A673 (cell line): ENCODE measurements at regions of chr11 and their contacts with region 1.

Region 1: GRCh38 chr11:59822989-59823566 is 12.5 kb upstream of the MRPL16 start:
- DNase-seq: peak; percentile 73
- H3K4me3 ChIP-seq: no peak overlapping the region
- H3K27ac ChIP-seq: no peak overlapping the region
- H3K4me1 ChIP-seq: no peaks in the 10 kb centered on the region
- H3K27me3 ChIP-seq: no peaks in the 10 kb centered on the region
- CTCF ChIP-seq: peak; percentile 68

Region 2: DNA sequence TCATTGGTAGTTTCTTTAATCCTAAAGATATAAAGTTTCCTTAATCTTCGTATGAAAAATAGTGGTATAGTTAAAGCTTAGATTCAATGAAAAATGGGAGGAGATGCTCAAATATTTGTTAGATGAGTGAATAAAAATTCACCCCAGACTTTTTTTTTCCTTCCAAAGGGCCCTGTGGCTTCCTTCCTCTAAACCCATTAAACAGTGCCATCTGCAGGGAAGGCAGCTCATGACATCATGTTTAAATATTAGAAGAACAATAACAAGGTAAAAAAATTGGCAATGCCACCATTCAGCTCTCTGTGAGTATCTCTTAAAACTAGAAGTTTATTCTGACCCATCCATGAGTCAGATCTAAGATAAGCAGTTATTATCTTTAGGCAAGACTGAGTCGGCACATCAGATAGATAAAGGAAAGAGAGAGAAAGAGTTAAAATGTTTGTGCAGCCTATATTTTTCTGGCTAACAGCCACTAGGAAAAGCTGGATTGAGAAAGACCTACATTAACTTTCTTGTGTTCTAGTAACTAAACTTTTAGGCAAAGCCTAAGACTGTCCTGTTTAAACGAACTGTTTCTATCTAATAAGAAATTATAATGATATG is 96.0 kb after region 1 on chr11:
- CTCF ChIA-PET with region 1: interaction called, 7 read pairs
- POLR2A ChIA-PET with region 1: no interaction called
- intact Hi-C with region 1: loop called (anchors 2 kb)
- DNase-seq: peak; percentile 77
- H3K4me3 ChIP-seq: no peak overlapping the region
- H3K27ac ChIP-seq: no peak overlapping the region
- H3K4me1 ChIP-seq: no peaks in the 10 kb centered on the region
- H3K27me3 ChIP-seq: no peaks in the 10 kb centered on the region
- CTCF ChIP-seq: peak; percentile 71

Region 3: GRCh38 chr11:60029015-60029632 is 206.0 kb after region 1 on chr11:
- CTCF ChIA-PET with region 1: no interaction called
- POLR2A ChIA-PET with region 1: no interaction called
- intact Hi-C with region 1: loop called (anchors 10 kb)
- DNase-seq: no peak
- H3K4me3 ChIP-seq: no peak overlapping the region
- H3K27ac ChIP-seq: no peak overlapping the region
- H3K4me1 ChIP-seq: no peaks in the 10 kb centered on the region
- H3K27me3 ChIP-seq: peaks cover 56% of the 10 kb centered on the region
- CTCF ChIP-seq: no peak

Region 4: DNA sequence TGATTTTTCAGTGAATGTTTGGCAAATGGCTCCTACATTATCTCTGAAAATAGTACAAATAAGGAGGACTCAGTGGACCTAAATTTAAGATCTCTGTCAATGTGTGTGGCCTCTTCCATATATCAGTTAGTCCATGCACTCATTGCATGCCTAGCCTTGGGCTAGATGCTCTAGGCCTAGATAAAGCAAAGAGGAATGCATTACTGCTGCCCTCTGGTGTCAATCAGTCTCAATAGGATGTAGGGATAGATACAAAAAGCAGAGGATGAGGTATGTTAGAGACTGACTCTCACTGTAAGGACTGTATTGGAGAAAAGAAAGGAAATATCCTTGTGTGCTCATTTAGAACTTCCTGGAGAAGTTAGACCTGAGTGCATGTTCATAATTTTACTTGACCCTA is 307.4 kb after region 1 on chr11:
- CTCF ChIA-PET with region 1: interaction called, 3 read pairs
- POLR2A ChIA-PET with region 1: no interaction called
- intact Hi-C with region 1: loop called (anchors 2 kb)
- DNase-seq: peak; percentile 63
- H3K4me3 ChIP-seq: no peak overlapping the region
- H3K27ac ChIP-seq: no peak overlapping the region
- H3K4me1 ChIP-seq: no peaks in the 10 kb centered on the region
- H3K27me3 ChIP-seq: no peaks in the 10 kb centered on the region
- CTCF ChIP-seq: peak; percentile 61

Region 5: GRCh38 chr11:60193687-60194433 is 370.8 kb after region 1 on chr11:
- CTCF ChIA-PET with region 1: no interaction called
- POLR2A ChIA-PET with region 1: no interaction called
- intact Hi-C with region 1: loop called (anchors 5 kb)
- DNase-seq: peak; percentile 79
- H3K4me3 ChIP-seq: no peak overlapping the region
- H3K27ac ChIP-seq: no peak overlapping the region
- H3K4me1 ChIP-seq: no peaks in the 10 kb centered on the region
- H3K27me3 ChIP-seq: no peaks in the 10 kb centered on the region
- CTCF ChIP-seq: peak; percentile 92

Region 6: DNA sequence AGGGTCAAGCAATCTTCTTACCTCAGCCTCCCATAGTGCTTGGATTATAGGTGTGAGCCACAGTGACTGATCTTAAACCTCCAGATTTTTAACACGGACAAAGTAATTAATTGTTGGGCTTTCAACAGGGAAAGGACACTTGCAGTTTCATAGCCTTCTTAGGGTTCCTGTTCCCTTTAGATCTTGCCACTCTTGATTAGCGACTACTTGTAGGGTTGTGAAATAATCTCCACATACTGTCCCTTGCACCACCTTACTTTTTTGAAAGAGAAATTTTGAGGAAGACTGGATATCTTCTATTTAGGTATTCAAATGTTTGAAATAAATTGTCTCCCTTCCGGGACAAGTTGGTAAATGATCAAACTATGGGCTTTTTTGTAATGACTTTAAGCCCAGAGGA is 412.2 kb after region 1 on chr11:
- CTCF ChIA-PET with region 1: no interaction called
- POLR2A ChIA-PET with region 1: no interaction called
- intact Hi-C with region 1: loop called (anchors 10 kb)
- DNase-seq: no peak
- H3K4me3 ChIP-seq: no peak overlapping the region
- H3K27ac ChIP-seq: no peak overlapping the region
- H3K4me1 ChIP-seq: no peaks in the 10 kb centered on the region
- H3K27me3 ChIP-seq: peaks cover 27% of the 10 kb centered on the region
- CTCF ChIP-seq: no peak